ENCODE measurements at regions of chr1 and their contacts with region 1.

Region 1: GRCh38 chr1:111516005-111516535 is 12.6 kb upstream of the ADORA3 start:
- DNase-seq: no peak
- ATAC-seq: peak; percentile 61 to 79
- H3K4me3 ChIP-seq: peak overlapping the region; percentile 56
- H3K27ac ChIP-seq: peak overlapping the region; percentile 84
- H3K4me1 ChIP-seq: peaks cover 61% of the 10 kb centered on the region
- H3K27me3 ChIP-seq: no peaks in the 10 kb centered on the region
- CTCF ChIP-seq: peak; percentile 47

Region 2: DNA sequence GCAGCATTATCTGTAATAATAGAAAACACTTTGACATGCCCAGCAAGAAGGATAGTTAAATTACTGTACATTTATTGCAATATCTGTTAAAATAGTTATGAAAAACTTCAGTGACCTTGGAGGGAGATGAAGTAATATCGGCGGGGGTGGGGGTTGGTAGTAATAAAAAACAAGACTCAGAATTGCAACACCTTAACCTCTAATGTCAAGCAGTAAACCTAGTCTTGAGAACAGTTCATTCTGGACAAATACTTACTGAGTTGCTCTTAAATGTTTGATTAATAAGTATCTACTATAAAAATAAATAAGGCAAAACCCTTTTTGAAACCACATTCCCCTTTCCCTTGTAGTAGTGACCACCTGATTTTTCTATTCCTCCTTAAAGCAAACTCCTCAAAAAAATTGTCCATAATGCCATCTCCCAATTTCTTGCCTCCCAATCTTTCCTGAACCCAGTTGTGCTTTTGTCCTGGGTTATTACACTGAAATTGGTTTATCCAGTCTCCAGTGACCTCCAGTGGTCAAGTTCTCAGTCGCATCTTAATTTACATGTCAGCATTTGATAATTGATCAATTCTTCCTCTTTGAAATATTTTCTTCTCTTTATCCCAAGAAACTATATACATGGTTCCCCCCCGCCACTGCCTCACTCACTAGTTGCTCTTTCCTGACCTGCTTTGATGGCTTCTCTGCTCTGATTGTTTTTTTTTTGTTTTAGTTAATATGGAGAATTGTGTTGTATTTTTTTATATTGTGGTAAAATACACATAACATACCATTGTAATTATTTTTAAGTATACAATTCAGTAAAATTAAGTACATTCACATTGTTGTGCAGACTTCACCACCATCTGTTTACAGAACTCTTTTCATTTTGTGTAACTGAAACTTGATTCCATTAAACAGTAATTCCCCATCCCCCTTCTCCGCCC is 140.3 kb after region 1 on chr1:
- intact Hi-C with region 1: loop called (anchors 10 kb)
- DNase-seq: no peak
- ATAC-seq: peak; percentile 68 to 85
- H3K4me3 ChIP-seq: no peak overlapping the region
- H3K27ac ChIP-seq: no peak overlapping the region
- H3K4me1 ChIP-seq: peaks cover 66% of the 10 kb centered on the region
- H3K27me3 ChIP-seq: no peaks in the 10 kb centered on the region
- CTCF ChIP-seq: peak; percentile 60

Measured in lower lobe of right lung (tissue), 2 donors.